ENCODE measurements at regions of chr11 and their contacts with region 1.

Region 1: DNA sequence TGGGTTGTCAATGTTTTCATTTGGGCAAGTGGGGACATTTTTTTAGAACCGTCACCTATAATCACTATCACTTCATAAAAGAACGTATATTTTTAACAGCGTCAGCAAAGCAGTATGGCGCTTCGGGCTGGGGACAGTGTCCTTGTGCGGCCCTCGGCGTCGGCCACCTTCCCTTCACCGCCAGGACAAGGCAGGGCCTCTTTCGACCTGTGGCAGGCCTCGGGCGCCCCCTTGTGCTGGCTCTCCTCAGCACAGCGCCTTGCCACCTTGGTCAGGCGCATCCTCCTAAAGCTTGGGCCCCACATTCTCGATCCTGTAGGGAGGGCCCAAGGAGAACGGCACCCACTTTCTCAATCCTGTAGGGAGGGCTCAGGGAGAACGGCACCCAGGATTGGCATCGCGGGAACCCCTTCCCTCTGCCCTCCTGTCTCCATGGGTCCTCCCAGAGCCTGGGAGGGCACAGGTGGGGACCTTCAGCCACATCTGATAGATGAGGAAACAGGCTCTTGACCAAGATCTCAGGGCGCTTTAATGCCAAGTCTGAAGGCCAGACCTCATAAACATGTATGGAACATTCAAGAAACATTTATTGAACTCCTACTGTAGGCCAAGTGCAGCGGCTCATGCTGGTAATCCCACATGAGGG is 11.5 kb upstream of the FADD start:
- DNase-seq: peak; percentile 67
- H3K4me3 Mint-ChIP-seq: no peak overlapping the region
- H3K27ac Mint-ChIP-seq: no peak overlapping the region
- H3K4me1 Mint-ChIP-seq: no peaks in the 10 kb centered on the region
- H3K27me3 Mint-ChIP-seq: no peaks in the 10 kb centered on the region
- CTCF ChIP-seq: peak; percentile 93

Region 2: GRCh38 chr11:69683764-69684333 is 507.8 kb before region 1 on chr11:
- CTCF ChIA-PET with region 1: interaction called, 4 read pairs
- POLR2A ChIA-PET with region 1: no interaction called
- intact Hi-C with region 1: loop called (anchors 1 kb)
- DNase-seq: peak; percentile 45
- H3K4me3 Mint-ChIP-seq: no peak overlapping the region
- H3K27ac Mint-ChIP-seq: no peak overlapping the region
- H3K4me1 Mint-ChIP-seq: peaks cover 7% of the 10 kb centered on the region
- H3K27me3 Mint-ChIP-seq: no peaks in the 10 kb centered on the region
- CTCF ChIP-seq: peak; percentile 66

Region 3: DNA sequence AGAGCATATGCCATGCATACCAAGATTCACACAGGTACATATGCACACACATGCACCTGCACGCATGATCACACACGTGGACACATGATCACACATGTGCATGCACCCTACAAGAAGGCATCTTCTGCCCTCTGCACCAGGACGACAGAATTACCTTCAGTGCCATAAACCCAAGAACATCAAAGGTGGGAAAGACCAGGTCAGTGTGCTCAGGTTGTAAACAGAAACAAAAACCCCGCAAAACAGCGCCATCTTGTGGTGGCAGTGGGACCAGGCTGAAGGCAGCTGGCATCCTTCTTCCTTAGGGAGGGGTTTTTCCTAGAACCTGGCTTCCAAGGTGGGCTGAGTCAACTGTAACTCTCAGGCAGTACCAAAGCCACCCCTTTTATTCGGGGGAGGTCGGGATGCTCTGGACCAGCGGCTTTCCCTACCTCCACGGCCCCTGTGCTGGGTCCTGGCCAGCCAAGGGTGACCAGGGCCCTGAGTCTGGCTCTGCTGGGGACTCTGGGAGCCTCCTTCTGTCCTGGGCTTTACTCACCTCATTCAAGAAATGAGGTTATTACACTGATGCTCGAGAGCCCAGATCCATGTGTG is 303.0 kb before region 1 on chr11:
- CTCF ChIA-PET with region 1: interaction called, 4 read pairs
- POLR2A ChIA-PET with region 1: no interaction called
- intact Hi-C with region 1: loop called (anchors 1 kb)
- DNase-seq: peak; percentile 69
- H3K4me3 Mint-ChIP-seq: no peak overlapping the region
- H3K27ac Mint-ChIP-seq: no peak overlapping the region
- H3K4me1 Mint-ChIP-seq: no peaks in the 10 kb centered on the region
- H3K27me3 Mint-ChIP-seq: peaks cover 12% of the 10 kb centered on the region
- CTCF ChIP-seq: peak; percentile 89

Region 4: GRCh38 chr11:69909561-69910496 is 281.8 kb before region 1 on chr11:
- CTCF ChIA-PET with region 1: interaction called, 29 read pairs
- POLR2A ChIA-PET with region 1: interaction called, 3 read pairs
- intact Hi-C with region 1: loop called (anchors 1 kb)
- DNase-seq: no peak
- H3K4me3 Mint-ChIP-seq: no peak overlapping the region
- H3K27ac Mint-ChIP-seq: no peak overlapping the region
- H3K4me1 Mint-ChIP-seq: peaks cover 1% of the 10 kb centered on the region
- H3K27me3 Mint-ChIP-seq: peaks cover 12% of the 10 kb centered on the region
- CTCF ChIP-seq: peak; percentile 78

Region 5: DNA sequence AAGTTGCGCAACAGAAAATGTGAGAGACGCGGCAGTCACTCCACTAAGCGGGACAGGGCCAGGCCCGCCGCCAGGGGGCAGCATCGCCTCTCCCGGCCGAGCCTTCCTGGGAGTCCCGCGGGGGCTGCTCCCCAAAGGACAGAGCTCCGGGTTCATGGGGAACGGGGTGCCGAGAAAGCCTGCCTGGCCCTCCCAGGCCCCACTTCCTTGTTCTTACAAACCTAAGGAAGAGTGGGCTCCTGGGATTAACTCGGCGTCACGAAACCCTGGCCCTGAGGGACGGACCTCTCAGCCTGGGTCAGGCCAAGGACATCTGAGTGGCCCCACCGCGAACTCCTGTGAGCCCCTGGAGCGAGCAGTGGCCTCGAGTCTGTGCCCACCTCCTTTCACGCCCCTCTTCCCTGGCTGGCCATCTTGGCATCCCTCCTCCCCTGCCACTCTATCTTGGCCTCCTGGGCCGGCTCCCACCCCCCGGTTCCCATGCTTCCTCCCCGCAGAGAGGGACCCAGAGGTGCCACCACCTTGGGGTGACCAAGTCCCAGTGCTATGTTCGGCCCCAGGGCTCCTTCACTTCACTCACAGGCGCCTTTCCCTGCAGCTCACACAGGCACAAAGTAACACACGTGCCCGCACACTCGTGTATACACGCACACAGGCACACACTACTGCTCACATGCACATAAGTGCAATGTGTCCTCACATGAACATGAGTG is 272.5 kb before region 1 on chr11:
- CTCF ChIA-PET with region 1: interaction called, 27 read pairs
- POLR2A ChIA-PET with region 1: interaction called, 3 read pairs
- intact Hi-C with region 1: loop called (anchors 1 kb)
- DNase-seq: peak; percentile 70
- H3K4me3 Mint-ChIP-seq: no peak overlapping the region
- H3K27ac Mint-ChIP-seq: no peak overlapping the region
- H3K4me1 Mint-ChIP-seq: peaks cover 15% of the 10 kb centered on the region
- H3K27me3 Mint-ChIP-seq: peaks cover 25% of the 10 kb centered on the region
- CTCF ChIP-seq: peak; percentile 93

Region 6: GRCh38 chr11:69943066-69943465 is 248.6 kb before region 1 on chr11:
- CTCF ChIA-PET with region 1: interaction called, 5 read pairs
- POLR2A ChIA-PET with region 1: no interaction called
- intact Hi-C with region 1: loop called (anchors 1 kb)
- DNase-seq: peak; percentile 31
- H3K4me3 Mint-ChIP-seq: no peak overlapping the region
- H3K27ac Mint-ChIP-seq: no peak overlapping the region
- H3K4me1 Mint-ChIP-seq: no peaks in the 10 kb centered on the region
- H3K27me3 Mint-ChIP-seq: no peaks in the 10 kb centered on the region
- CTCF ChIP-seq: peak; percentile 18

Region 7: GRCh38 chr11:70082829-70083228 is 108.8 kb before region 1 on chr11:
- CTCF ChIA-PET with region 1: no interaction called
- POLR2A ChIA-PET with region 1: no interaction called
- intact Hi-C with region 1: loop called (anchors 10 kb)
- DNase-seq: no peak
- H3K4me3 Mint-ChIP-seq: no peak overlapping the region
- H3K27ac Mint-ChIP-seq: no peak overlapping the region
- H3K4me1 Mint-ChIP-seq: peaks cover 4% of the 10 kb centered on the region
- H3K27me3 Mint-ChIP-seq: no peaks in the 10 kb centered on the region
- CTCF ChIP-seq: no peak